Prostate gland (tissue), 2 donors: ENCODE measurements at regions of chr12 and their contacts with region 1.

Region 1: DNA sequence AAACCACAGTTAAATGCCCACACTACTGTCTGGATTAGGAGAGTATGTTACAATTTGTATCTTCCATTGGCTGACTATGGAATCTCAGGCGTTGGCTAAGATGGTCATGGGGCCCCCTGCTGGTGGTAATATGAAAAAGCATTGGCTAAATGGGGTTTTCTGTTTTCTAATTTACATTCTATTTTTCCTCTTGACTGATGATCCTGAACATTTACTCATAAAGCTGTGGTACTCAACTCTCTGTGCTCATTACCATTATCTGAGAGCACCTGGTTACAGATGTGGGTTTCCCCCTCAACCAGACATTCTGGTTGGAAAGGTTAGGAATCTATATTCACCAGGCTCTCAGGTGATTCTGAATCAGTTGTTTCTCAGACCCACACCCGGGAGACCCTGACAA is 64.8 kb downstream of the WSCD2 start:
- DNase-seq: peak; percentile 9
- H3K4me3 ChIP-seq: no peak overlapping the region
- H3K27ac ChIP-seq: no peak overlapping the region
- H3K4me1 ChIP-seq: no peaks in the 10 kb centered on the region
- H3K27me3 ChIP-seq: no peaks in the 10 kb centered on the region
- CTCF ChIP-seq: peak; percentile 21 to 72 (median 60)
- POLR2A ChIP-seq: no peak

Region 2: DNA sequence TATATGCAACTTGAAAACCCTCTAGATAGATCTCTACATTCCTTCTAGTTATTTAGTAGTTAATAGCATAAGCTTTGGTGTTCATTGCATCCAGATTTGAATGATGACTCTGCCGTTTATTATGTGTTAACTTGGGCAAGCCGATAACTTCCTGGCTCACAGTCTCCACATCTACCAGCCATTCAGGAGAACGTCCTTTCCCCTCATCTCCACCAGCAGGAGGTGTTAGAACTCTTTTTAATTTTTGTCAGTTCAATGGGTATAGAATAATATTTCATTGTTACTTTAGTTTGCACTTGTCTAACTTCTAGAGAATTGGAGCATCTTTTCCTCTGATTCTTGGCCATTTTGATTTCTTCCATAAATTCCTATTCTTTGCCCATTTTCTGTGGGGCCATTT is 94.8 kb before region 1 on chr12:
- intact Hi-C with region 1: loop called (anchors 2 kb)
- DNase-seq: no peak
- H3K4me3 ChIP-seq: no peak overlapping the region
- H3K27ac ChIP-seq: no peak overlapping the region
- H3K4me1 ChIP-seq: no peaks in the 10 kb centered on the region
- H3K27me3 ChIP-seq: no peaks in the 10 kb centered on the region
- CTCF ChIP-seq: peak in 1 of 4 experiments; percentile 38
- POLR2A ChIP-seq: no peak

Region 3: GRCh38 chr12:108119126-108119976 is 74.6 kb before region 1 on chr12:
- intact Hi-C with region 1: no loop called
- DNase-seq: no peak
- H3K4me3 ChIP-seq: no peak overlapping the region
- H3K27ac ChIP-seq: no peak overlapping the region
- H3K4me1 ChIP-seq: no peaks in the 10 kb centered on the region
- H3K27me3 ChIP-seq: peaks cover 2% of the 10 kb centered on the region
- CTCF ChIP-seq: no peak
- POLR2A ChIP-seq: no peak

Region 4: GRCh38 chr12:108133482-108133881 is 60.4 kb before region 1 on chr12:
- intact Hi-C with region 1: loop called (anchors 5 kb)
- DNase-seq: no peak
- H3K4me3 ChIP-seq: no peak overlapping the region
- H3K27ac ChIP-seq: no peak overlapping the region
- H3K4me1 ChIP-seq: no peaks in the 10 kb centered on the region
- H3K27me3 ChIP-seq: no peaks in the 10 kb centered on the region
- CTCF ChIP-seq: no peak
- POLR2A ChIP-seq: no peak

Region 5: GRCh38 chr12:108482717-108483212 is 288.8 kb after region 1 on chr12:
- intact Hi-C with region 1: no loop called
- DNase-seq: no peak
- H3K4me3 ChIP-seq: no peak overlapping the region
- H3K27ac ChIP-seq: no peak overlapping the region
- H3K4me1 ChIP-seq: no peaks in the 10 kb centered on the region
- H3K27me3 ChIP-seq: no peaks in the 10 kb centered on the region
- CTCF ChIP-seq: no peak
- POLR2A ChIP-seq: no peak